ENCODE measurements at regions of chr10 and their contacts with region 1.

Region 1: DNA sequence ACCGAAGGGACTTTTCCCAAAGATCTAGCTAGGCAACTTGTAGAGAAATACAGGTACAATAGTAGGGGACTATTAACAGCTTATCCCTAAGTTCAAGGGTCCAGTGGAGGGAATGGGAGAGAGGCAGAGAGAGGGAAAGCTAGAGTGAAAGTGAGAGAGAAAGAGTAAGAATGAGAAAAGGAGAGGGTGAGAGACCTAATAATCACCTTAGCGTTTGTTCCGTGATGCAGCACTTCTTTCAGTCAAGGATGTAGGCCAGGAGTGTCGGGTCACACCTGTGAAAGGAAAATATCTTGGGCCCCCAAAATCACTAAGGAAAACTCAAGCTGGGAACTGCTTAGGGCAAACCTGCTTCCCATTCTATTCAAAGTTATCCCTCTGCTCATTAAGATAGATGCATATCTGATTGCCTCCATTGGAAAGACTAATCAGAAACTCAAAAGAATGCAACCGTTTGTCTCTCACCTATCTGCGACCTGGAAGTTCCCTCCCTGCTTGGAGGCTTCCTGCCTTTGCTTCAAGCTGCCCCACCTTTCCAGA is 75.2 kb downstream of the ST8SIA6 start:
- DNase-seq: no peak
- H3K4me3 ChIP-seq: no peak overlapping the region
- H3K27ac ChIP-seq: no peak overlapping the region
- H3K4me1 ChIP-seq: peaks cover 0 to 5% (median 0%) of the 10 kb centered on the region in 4 donors
- H3K27me3 ChIP-seq: no peaks in the 10 kb centered on the region
- CTCF ChIP-seq: no peak
- EP300 ChIP-seq: no peak
- POLR2A ChIP-seq: no peak

Region 2: DNA sequence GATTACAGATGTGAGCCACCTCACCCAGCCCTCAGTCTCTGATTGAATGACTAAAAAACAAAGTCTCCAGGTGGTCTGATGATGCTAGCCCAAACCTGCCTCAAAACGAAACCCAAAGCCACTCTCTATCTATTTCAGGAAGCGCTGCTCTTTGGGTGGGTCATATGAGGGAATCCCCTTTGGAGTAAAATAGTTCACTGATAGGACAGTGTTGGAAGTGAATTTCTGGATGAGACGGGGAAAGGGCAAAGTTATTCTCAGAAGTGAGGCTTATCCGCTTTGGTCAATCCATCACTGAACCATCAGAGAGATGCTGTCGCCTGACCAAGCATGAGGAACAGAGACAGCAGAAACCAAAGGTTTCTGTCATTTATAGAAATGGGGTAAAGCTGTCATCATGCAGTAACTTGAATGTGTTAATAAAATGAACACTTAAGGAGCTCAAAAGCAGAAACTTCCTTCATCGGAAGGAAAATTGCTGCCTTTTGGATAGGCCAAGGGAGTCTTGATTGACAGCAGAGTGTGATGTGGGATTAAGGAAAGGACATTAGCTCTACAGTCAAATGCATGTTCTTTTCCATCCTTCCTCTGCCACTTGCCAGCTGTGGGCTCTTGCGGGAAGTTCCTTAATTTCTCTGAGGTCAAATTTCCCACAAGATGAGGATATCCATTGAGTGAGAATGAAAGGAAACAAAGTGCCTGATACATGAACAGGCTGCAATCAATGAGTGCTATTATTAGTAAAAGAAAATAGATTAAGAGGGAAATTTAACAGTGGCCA is 792.7 kb before region 1 on chr10:
- in situ Hi-C with region 1: no loop called
- intact Hi-C with region 1: no loop called
- DNase-seq: no peak
- H3K4me3 ChIP-seq: no peak overlapping the region
- H3K27ac ChIP-seq: no peak overlapping the region
- H3K4me1 ChIP-seq: no peaks in the 10 kb centered on the region
- H3K27me3 ChIP-seq: no peaks in the 10 kb centered on the region
- CTCF ChIP-seq: no peak
- EP300 ChIP-seq: no peak
- POLR2A ChIP-seq: no peak

Region 3: GRCh38 chr10:17188644-17189172 is 190.5 kb before region 1 on chr10:
- in situ Hi-C with region 1: no loop called
- intact Hi-C with region 1: no loop called
- DNase-seq: no peak
- H3K4me3 ChIP-seq: no peak overlapping the region
- H3K27ac ChIP-seq: no peak overlapping the region
- H3K4me1 ChIP-seq: no peaks in the 10 kb centered on the region
- H3K27me3 ChIP-seq: no peaks in the 10 kb centered on the region
- CTCF ChIP-seq: no peak
- EP300 ChIP-seq: no peak
- POLR2A ChIP-seq: no peak

Region 4: DNA sequence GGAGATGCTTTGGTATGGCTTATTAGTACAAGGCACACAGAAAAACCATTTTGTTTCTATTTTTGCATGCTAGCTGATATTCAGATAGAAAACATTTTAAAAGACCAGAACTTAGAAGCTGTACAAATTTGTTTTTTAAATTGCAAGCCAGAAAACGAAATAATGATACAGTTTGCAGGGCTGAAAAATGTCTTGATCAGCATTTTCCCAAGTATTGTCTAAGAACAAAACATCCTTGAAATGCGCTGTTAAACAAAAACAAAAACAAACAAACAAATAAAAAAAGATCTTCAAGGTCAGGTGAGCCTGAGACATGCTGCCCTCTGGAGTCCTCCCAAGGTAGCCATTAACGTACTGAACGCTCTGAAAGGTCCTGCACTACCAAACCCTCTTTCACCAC is 52.8 kb before region 1 on chr10:
- in situ Hi-C with region 1: no loop called
- intact Hi-C with region 1: loop called (anchors 2 kb)
- DNase-seq: no peak
- H3K4me3 ChIP-seq: no peak overlapping the region
- H3K27ac ChIP-seq: no peak overlapping the region
- H3K4me1 ChIP-seq: no peaks in the 10 kb centered on the region
- H3K27me3 ChIP-seq: no peaks in the 10 kb centered on the region
- CTCF ChIP-seq: no peak
- EP300 ChIP-seq: no peak
- POLR2A ChIP-seq: no peak